ENCODE measurements at regions of chr11 and their contacts with region 1.

Region 1: GRCh38 chr11:101848262-101848661 is 66.5 kb upstream of the CEP126 start:
- DNase-seq: peak; percentile 77
- ATAC-seq: no peak
- H3K4me3 ChIP-seq: no peak overlapping the region
- H3K27ac ChIP-seq: no peak overlapping the region
- H3K4me1 ChIP-seq: peaks cover 4% of the 10 kb centered on the region; the same call in 1 of the 2 replicates
- H3K27me3 ChIP-seq: no peaks in the 10 kb centered on the region
- CTCF ChIP-seq: peak; percentile 84

Region 2: GRCh38 chr11:101390539-101390938 is 457.7 kb before region 1 on chr11:
- CTCF ChIA-PET with region 1: no interaction called
- POLR2A ChIA-PET with region 1: no interaction called
- intact Hi-C with region 1: loop called (anchors 1 kb)
- DNase-seq: peak; percentile 53
- ATAC-seq: peak; percentile 57
- H3K4me3 ChIP-seq: no peak overlapping the region
- H3K27ac ChIP-seq: no peak overlapping the region
- H3K4me1 ChIP-seq: no peaks in the 10 kb centered on the region
- H3K27me3 ChIP-seq: peaks cover 22% of the 10 kb centered on the region; the same call in 1 of the 2 replicates
- CTCF ChIP-seq: peak; percentile 48

Region 3: GRCh38 chr11:101456812-101457211 is 391.4 kb before region 1 on chr11:
- CTCF ChIA-PET with region 1: no interaction called
- POLR2A ChIA-PET with region 1: no interaction called
- intact Hi-C with region 1: loop called (anchors 1 kb)
- DNase-seq: peak; percentile 66
- ATAC-seq: 0 out of 2 replicates have a peak, but pooled peaks have one; percentile 23
- H3K4me3 ChIP-seq: no peak overlapping the region
- H3K27ac ChIP-seq: no peak overlapping the region
- H3K4me1 ChIP-seq: peaks cover 25% of the 10 kb centered on the region
- H3K27me3 ChIP-seq: no peaks in the 10 kb centered on the region
- CTCF ChIP-seq: peak; percentile 81

Region 4: GRCh38 chr11:101617735-101618332 is 230.4 kb before region 1 on chr11:
- CTCF ChIA-PET with region 1: no interaction called
- POLR2A ChIA-PET with region 1: no interaction called
- intact Hi-C with region 1: loop called (anchors 10 kb)
- DNase-seq: peak; percentile 72
- ATAC-seq: peak; percentile 82
- H3K4me3 ChIP-seq: no peak overlapping the region
- H3K27ac ChIP-seq: peak overlapping the region; percentile 64
- H3K4me1 ChIP-seq: peaks cover 18% of the 10 kb centered on the region
- H3K27me3 ChIP-seq: peaks cover 4% of the 10 kb centered on the region; the same call in 1 of the 2 replicates
- CTCF ChIP-seq: no peak

Region 5: GRCh38 chr11:101835506-101836063 is 12.7 kb before region 1 on chr11:
- CTCF ChIA-PET with region 1: interaction called, 3 read pairs
- POLR2A ChIA-PET with region 1: no interaction called
- intact Hi-C with region 1: loop called (anchors 1 kb)
- DNase-seq: peak; percentile 89
- ATAC-seq: peak; percentile 95
- H3K4me3 ChIP-seq: peak overlapping the region; percentile 33; the same call in 1 of the 2 replicates
- H3K27ac ChIP-seq: peak overlapping the region; percentile 55
- H3K4me1 ChIP-seq: peaks cover 14% of the 10 kb centered on the region
- H3K27me3 ChIP-seq: no peaks in the 10 kb centered on the region
- CTCF ChIP-seq: no peak

Region 6: DNA sequence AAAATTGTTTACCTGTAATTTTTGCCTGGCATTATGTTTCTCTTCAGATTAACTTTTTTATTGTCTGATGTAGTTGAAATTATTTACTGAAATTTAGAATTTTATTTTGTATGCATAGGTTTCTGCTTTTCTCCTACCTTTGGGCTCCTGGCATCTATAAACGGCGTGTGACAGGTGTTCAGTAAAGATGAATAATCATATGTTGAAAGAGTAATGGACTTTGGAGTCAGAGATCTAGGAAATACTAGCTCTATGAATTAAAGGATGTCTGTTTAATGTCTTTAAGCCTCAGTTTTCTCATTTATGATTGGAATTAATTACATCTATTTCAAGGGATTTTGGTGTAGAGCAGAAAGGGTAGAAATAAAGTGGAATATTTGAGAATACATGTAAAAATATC is 75.3 kb after region 1 on chr11:
- CTCF ChIA-PET with region 1: no interaction called
- POLR2A ChIA-PET with region 1: no interaction called
- intact Hi-C with region 1: no loop called
- DNase-seq: no peak
- ATAC-seq: no peak
- H3K4me3 ChIP-seq: no peak overlapping the region
- H3K27ac ChIP-seq: no peak overlapping the region
- H3K4me1 ChIP-seq: peaks cover 8% of the 10 kb centered on the region
- H3K27me3 ChIP-seq: no peaks in the 10 kb centered on the region
- CTCF ChIP-seq: no peak

Region 7: DNA sequence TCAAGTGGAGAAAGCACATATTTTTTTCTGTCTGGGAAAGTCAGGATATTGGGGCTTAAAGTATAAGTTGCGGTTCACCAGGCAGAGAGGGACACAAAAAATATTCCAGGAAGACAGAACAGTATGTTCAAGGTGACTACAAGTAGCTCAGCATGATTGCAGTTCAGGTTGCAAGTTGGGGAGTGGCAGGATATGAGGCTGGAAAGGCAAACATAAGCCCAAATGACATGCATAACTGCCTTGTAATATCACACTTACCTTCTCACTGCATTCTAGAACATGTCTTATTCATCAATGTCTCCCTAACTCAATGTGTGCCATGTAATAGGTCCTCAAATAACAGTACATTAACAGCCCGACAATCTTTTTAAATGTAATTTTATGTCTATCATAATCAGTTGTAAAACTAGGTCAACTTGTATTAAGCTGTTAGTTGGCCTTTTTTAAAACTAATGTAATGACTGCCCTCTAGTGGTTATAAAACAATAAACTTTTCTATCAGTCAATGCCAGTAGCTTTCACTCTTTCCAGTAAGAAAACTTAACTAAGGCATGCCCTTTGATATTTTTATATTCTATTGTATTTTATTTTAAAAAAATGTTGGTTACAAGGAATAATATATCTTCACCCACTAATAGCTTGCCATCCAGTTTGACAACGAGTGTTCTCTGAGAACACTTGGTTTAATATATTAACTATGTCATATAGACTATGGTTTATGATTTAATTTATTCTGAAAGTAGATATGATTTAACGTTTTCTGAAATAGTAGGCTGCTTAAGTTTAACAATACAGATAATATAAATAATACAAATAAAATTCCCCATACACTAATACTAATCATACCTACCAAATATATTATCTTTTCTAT is 159.5 kb after region 1 on chr11:
- CTCF ChIA-PET with region 1: interaction called, 15 read pairs
- POLR2A ChIA-PET with region 1: no interaction called
- intact Hi-C with region 1: loop called (anchors 1 kb)
- DNase-seq: peak; percentile 96
- ATAC-seq: peak; percentile 75
- H3K4me3 ChIP-seq: peak overlapping the region; percentile 41
- H3K27ac ChIP-seq: peak overlapping the region; percentile 90
- H3K4me1 ChIP-seq: peaks cover 61% of the 10 kb centered on the region
- H3K27me3 ChIP-seq: no peaks in the 10 kb centered on the region
- CTCF ChIP-seq: peak; percentile 85

Measured in PC-3 (cell line).